ENCODE measurements at regions of chr11 and their contacts with region 1.

Region 1: GRCh38 chr11:105862736-105863367 is 159.2 kb downstream of the MSANTD4 start:
- DNase-seq: peak in 1 of 2 donors; percentile 51
- ATAC-seq: no peak
- H3K4me3 ChIP-seq: no peak overlapping the region
- H3K4me3 Mint-ChIP-seq: no peak overlapping the region
- H3K27ac ChIP-seq: no peak overlapping the region
- H3K27ac Mint-ChIP-seq: no peak overlapping the region
- H3K4me1 ChIP-seq: no peaks in the 10 kb centered on the region
- H3K4me1 Mint-ChIP-seq: no peaks in the 10 kb centered on the region
- H3K27me3 ChIP-seq: no peaks in the 10 kb centered on the region
- H3K27me3 Mint-ChIP-seq: no peaks in the 10 kb centered on the region
- CTCF ChIP-seq: peak; percentile 20

Region 2: GRCh38 chr11:104609311-104610085 is 1253.4 kb before region 1 on chr11:
- intact Hi-C with region 1: loop called (anchors 10 kb)
- DNase-seq: peak in 1 of 2 donors; percentile 75
- ATAC-seq: peak; percentile 85 to 94 (median 86)
- H3K4me3 ChIP-seq: no peak overlapping the region
- H3K4me3 Mint-ChIP-seq: no peak overlapping the region
- H3K27ac ChIP-seq: no peak overlapping the region
- H3K27ac Mint-ChIP-seq: peak overlapping the region in 1 of 2 donors; percentile 29
- H3K4me1 ChIP-seq: peaks cover 3% of the 10 kb centered on the region
- H3K4me1 Mint-ChIP-seq: peaks cover 7% of the 10 kb centered on the region in 2 donors
- H3K27me3 ChIP-seq: no peaks in the 10 kb centered on the region
- H3K27me3 Mint-ChIP-seq: no peaks in the 10 kb centered on the region
- CTCF ChIP-seq: peak; percentile 82

Region 3: DNA sequence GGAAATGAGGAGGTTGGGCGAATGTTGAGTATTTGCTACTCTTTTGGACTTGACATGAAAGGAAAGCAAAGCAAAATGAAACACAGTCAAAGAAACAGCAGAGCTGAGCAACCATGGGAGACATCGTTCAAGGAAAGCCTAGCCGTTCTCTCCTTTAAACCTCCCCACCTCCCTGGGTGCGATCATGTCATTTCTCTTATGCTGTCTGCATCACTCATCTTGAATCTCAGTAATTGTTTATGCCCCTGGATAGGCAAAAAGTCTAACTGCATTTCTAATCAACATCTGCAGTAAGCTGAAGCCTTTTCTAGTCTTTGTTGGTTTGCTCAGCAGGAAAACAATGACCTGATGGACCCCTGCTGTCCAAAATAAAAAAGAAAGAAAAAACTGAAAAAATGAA is 52.2 kb after region 1 on chr11:
- intact Hi-C with region 1: no loop called
- DNase-seq: no peak
- ATAC-seq: no peak
- H3K4me3 ChIP-seq: no peak overlapping the region
- H3K4me3 Mint-ChIP-seq: no peak overlapping the region
- H3K27ac ChIP-seq: no peak overlapping the region
- H3K27ac Mint-ChIP-seq: no peak overlapping the region
- H3K4me1 ChIP-seq: no peaks in the 10 kb centered on the region
- H3K4me1 Mint-ChIP-seq: no peaks in the 10 kb centered on the region
- H3K27me3 ChIP-seq: no peaks in the 10 kb centered on the region
- H3K27me3 Mint-ChIP-seq: no peaks in the 10 kb centered on the region
- CTCF ChIP-seq: no peak

Measured in natural killer cell (primary cell).